Posterior cingulate gyrus (tissue), 11 donors: ENCODE measurements at regions of chr1 and their contacts with region 1.

Region 1: DNA sequence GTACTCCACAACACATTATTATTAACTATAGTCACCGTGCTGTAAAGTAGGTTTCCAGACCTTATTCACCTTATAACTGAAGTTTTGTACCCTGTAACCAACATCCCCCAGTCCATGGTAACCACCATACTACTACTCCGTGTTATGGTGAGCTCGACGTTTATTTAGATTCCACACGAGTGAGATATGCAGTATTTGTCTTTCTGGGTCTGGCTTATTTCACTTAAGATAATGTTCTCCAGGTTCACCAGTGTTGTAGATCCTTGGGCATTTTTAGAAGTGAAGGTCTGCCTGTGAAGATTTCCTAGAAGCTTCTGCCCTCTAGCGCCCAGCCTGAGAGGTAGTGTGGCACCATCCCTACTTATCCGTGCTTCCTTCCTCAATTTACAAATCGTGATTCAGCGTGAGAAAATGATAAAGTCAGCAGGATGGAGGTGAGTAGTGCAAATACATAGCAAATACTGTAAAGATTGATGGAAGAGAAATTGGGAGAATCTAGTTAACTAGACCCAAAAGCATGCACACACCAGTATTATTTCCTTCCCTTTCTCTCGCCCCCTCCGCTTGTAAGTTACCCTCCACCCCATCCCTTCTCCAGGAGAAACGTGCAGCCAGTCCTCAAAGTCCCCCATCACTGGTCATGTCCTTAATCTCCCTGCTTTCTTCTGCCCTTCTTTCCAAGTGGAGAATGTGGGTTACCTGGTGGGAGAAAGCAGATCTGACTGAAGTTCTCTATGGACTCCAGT is 36.0 kb upstream of the DISC1 start:
- DNase-seq: peak in 6 of 10 donors; percentile 33 to 92 (median 52)

Region 2: GRCh38 chr1:231357831-231358354 is 232.7 kb before region 1 on chr1:
- intact Hi-C with region 1: loop called (anchors 1 kb)
- DNase-seq: peak in 2 of 10 donors; percentile 18 to 27